BJ (cell line): ENCODE measurements at regions of chr15 and their contacts with region 1.

Region 1: DNA sequence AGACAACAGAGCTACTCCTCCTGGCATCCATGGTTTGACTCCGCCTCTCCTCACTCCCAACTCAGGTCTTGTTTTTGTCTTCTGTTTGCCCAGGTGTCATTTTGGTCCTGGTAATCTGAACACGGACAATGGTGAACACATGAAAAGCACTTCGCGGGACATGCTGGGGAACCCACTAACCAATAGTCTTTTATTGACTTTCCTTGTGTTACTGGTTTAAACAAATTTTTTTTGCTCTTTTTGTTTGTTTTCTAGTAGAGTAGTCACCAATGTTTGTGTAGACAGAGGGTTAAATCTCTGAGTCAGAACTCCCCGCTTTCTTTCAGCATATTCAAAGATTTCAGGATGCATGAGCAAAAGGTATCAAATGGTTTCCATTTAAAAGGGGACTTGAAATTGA is 38.3 kb downstream of the LARP6 start:
- DNase-seq: no peak
- H3K4me3 ChIP-seq: no peak overlapping the region
- H3K27me3 ChIP-seq: no peaks in the 10 kb centered on the region
- CTCF ChIP-seq: no peak

Region 2: DNA sequence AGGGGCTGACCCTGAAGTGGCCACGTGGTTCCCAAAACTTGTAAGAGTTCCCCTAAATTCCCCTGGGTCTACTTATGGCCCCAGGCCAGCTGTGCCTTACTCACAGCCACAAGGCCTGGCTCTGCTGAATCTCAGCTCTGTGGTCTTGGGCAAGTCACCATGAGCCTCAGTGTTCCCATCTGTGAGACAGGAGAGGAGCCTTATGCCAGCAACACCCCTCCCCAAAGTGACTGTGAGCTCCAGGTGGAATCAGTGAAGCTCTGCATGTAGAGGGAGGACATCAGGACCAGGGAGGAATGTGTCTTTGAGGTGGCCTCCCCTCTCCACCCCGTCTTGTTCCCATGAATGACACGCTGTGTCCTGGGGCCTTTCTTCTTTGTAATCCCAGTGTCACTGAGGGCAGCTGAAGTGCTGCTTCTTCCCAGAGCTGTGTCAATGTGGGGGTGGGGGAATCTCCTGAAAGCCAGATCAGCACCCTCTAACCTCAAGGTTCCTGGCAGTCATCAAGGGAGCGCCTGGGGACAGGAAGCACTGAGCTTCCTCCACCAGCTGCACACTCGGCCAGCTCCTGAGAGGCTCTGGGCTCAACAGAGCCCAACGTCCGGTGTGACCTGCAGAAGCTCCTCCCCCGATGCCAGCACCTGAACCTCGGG is 311.2 kb before region 1 on chr15:
- CTCF ChIA-PET with region 1: no interaction called
- POLR2A ChIA-PET with region 1: no interaction called
- DNase-seq: no peak
- H3K4me3 ChIP-seq: no peak overlapping the region
- H3K27me3 ChIP-seq: peaks cover 3% of the 10 kb centered on the region
- CTCF ChIP-seq: no peak

Region 3: GRCh38 chr15:70670680-70671079 is 145.0 kb before region 1 on chr15:
- CTCF ChIA-PET with region 1: interaction called, 15 read pairs
- POLR2A ChIA-PET with region 1: interaction called, 6 read pairs
- DNase-seq: no peak
- H3K4me3 ChIP-seq: no peak overlapping the region
- H3K27me3 ChIP-seq: no peaks in the 10 kb centered on the region
- CTCF ChIP-seq: peak; percentile 15; the same call in 1 of the 2 replicates

Region 4: DNA sequence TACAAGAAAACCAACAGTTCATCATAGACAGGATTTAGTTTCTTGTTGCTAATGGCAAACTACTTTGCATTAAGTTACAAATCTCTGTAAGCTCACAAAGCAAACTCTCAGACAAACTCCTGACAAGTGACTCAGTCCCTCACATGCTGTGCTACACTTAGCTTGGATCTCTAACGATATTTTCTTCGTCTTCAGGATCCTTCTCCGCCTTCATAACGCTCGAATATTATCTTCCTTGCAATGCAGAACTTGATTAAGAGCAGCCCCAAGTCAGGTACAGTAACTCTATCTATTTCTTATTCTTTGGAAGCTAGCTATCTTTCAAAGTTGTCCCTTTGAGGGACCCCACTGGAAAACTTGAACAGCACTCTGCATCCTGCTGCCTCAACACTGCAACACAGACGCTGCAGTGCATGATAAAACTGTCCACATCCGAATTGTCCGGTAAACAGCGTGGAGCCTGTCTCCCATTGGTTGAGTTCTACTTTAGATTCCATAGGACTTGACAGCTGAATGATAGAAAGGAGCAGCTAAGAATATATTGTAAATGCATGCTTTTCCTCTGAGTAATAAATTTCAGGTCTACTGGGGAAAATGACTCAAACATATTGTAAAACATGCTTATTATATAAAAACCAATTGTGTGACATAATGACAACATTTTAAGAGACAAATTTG is 113.6 kb before region 1 on chr15:
- CTCF ChIA-PET with region 1: interaction called, 21 read pairs
- POLR2A ChIA-PET with region 1: no interaction called
- DNase-seq: no peak
- H3K4me3 ChIP-seq: no peak overlapping the region
- H3K27me3 ChIP-seq: no peaks in the 10 kb centered on the region
- CTCF ChIP-seq: no peak

Region 5: GRCh38 chr15:70799667-70800450 is 15.8 kb before region 1 on chr15:
- CTCF ChIA-PET with region 1: interaction called, 23 read pairs
- POLR2A ChIA-PET with region 1: no interaction called
- DNase-seq: peak; percentile 97
- H3K4me3 ChIP-seq: no peak overlapping the region
- H3K27me3 ChIP-seq: no peaks in the 10 kb centered on the region
- CTCF ChIP-seq: no peak

Region 6: DNA sequence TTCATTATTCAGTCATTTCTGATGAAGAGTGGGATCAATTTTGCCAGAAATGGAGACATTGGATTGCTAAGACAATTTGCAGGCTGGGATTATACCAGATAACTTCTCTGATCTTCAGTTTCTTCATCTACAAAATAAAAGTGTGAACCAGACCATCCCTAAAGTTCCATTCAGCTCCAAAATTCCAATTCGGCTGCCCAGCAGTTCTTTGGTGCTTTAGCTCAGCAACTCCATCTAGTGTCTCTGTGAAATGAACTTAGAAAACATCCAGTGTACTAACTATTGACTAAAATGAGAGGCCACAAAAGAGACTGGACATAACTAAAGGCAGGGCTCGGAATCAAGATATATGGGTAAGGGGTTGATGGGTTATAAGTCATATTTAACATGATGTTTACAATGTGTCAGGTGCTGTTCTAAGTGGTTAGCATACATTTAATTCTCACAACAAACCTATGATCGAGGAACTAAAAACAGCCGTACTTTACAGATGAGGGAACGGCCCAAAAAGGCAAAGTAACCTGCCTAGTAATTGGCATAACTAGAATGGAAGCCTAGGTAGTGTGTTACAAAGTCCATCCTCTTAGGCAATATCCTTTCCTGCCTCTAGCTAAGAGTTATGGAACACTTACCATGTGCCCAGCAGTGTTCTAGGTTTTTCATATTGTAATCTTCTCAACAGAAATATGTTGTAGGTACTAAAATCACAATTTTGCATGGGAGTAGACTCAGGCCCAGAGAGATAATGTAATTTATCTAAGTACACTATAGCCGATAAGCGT is 59.5 kb after region 1 on chr15:
- CTCF ChIA-PET with region 1: interaction called, 16 read pairs
- POLR2A ChIA-PET with region 1: no interaction called
- DNase-seq: no peak
- H3K4me3 ChIP-seq: no peak overlapping the region
- H3K27me3 ChIP-seq: no peaks in the 10 kb centered on the region
- CTCF ChIP-seq: peak; percentile 77